ENCODE measurements at regions of chr7 and their contacts with region 1.

Region 1: DNA sequence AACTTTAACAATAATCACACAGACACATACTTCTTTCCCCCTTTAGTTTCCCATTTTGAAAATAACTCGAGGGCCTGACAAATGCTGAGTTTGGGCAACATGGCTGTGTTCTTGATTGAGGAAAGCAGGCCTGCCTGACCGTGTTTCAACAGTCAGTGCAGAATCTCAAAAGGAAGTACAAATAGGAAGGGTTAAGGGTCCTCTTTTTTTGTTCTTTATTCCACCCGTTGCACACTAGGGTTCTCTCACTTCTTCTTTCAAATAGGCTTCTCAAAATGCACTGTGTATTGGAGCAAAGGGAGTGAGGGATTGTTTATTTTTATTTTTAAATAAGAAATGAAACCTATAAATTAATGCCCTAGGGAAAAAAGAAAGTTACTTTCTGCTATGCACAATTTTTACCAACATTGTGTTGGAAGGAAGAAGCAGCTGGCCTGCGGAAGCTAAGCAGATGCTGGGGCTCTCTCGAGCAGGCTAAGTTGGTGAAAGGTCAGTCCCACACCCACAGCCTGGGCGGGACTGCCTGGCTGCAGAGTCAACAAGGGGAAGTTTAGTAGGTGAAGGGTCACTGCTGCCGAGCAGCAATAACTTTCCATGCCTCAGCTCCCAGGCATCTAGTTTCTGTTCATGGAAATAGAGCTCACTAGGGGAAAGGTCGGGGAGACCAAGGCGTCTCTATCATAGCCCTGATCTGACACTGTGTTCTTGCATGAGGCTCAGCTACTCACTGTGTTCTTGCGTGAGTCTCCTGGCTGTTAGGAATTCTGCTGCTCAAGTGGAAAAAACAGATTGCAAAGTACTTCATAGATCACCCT is 12.2 kb upstream of the PDK4 start:
- DNase-seq: peak; percentile 99
- H3K4me3 ChIP-seq: peak overlapping the region in 1 of 3 experiments; percentile 38
- H3K27ac ChIP-seq: no peak overlapping the region
- H3K4me1 ChIP-seq: peaks cover 21% of the 10 kb centered on the region
- H3K27me3 ChIP-seq: peaks cover 0 to 2% of the 10 kb centered on the region in 2 experiments
- CTCF ChIP-seq: no peak
- POLR2A ChIP-seq: no peak

Region 2: DNA sequence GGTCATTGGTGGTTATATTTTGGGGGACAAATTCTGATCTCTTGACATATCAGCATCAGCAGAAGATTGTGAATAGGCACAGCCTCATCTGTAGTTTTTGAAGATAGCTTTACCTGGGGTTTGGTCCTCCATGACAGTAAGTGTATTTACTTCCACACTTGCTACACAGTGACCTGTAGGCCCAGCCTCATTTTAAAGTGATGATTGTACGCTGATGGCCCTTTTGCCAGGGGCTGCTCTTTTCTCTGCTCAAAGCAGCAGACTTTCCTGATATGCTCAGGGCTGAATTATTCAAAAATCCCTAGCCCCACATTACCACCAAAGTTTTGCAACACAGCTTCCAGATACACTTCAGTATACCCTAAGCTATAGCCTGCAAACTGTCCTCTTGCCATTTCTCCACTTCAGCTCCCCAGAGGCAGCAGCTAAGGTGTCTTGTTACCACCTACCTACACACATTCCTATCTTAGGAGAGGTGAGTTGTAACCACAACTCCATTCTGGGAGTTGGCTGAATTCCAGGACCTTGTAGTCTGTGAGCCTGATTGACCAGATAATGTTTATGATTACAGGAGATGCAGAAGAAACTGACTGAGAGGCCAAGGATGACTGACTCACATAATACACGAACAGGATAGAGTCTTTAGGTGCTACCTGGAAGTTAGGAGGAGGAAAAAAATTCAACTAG is 116.8 kb before region 1 on chr7:
- CTCF ChIA-PET with region 1: no interaction called
- POLR2A ChIA-PET with region 1: no interaction called
- dilution Hi-C with region 1: no loop called
- intact Hi-C with region 1: no loop called
- DNase-seq: no peak
- H3K4me3 ChIP-seq: no peak overlapping the region
- H3K27ac ChIP-seq: no peak overlapping the region
- H3K4me1 ChIP-seq: no peaks in the 10 kb centered on the region
- H3K27me3 ChIP-seq: peaks cover 3% of the 10 kb centered on the region in 2 experiments
- CTCF ChIP-seq: no peak
- POLR2A ChIP-seq: no peak

Region 3: DNA sequence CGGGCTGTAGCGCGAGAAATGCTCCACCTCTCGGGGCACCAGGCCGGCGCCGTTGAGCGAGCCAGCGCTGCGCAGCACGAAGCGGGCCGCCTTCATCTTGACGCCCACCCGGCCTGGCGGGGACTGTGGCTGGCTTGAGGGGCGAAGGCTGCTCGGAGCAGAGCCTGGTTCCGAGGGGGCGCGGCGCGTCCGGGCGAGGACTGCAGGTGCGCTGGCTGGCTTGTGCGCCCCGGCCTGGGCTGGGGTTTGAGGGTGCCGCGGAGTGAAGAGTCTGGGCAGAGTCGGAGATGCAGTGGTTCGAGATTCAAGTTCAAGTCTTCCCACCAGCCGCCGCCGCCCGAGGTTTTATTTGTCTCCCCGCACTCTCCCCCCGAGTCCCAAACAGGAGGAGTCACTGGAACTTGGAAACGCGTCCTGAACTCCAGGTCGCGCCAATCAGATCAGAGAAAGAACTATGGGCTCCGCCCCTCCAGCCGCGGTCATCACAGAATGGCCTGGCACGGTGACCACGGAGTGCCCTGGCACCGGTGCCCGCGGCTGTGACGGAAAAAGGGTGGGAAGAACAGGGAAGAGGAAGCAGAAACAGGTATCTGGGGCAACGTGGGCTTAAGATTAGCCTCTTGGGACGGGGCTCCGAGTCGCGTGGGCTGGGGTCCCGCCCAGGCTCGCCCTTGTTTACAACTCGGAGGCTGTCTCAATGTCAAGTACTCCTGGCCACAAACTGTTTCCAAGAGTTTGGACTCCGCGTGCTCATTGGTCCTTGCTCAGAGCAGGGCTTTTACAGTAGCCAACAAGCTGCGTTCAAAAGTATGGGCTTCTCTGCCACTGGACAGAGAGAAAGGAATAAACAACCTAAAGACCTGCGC is 12.1 kb before region 1 on chr7 and contains the start of gene PDK4:
- CTCF ChIA-PET with region 1: interaction called, 5 read pairs
- POLR2A ChIA-PET with region 1: no interaction called
- dilution Hi-C with region 1: no loop called
- intact Hi-C with region 1: loop called (anchors 1 kb)
- DNase-seq: peak; percentile 93
- H3K4me3 ChIP-seq: peak within 1 kb of the TSS; percentile 14 to 49 (median 36)
- H3K27ac ChIP-seq: no peak within 1 kb of the TSS
- H3K4me1 ChIP-seq: peaks cover 3% of the 10 kb centered on the region
- H3K27me3 ChIP-seq: peaks cover 3% of the 10 kb centered on the region in 2 experiments
- CTCF ChIP-seq: no peak
- POLR2A ChIP-seq: no peak
- total RNA-seq, gene PDK4: 1.2 and 2.5 TPM in 2 replicates

Region 4: DNA sequence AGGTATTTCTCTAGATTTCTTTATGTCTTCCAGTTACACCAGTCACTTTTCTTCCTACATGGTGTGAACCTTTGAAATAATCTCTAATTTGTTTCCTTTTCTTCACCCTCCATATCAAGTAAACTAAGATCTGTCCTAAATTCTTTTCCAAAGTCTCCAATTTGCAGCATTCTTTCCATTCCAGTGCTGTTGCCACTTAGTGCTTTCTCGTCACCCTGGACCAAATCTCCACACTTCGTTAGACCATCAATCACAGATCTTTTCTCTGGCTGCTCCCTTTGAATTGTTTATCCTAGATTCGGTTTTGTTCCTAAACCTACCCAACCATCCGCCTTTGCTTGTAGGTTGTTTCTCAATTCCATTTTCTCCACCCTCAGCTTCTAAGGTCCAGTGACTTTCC is 238.5 kb after region 1 on chr7:
- CTCF ChIA-PET with region 1: no interaction called
- POLR2A ChIA-PET with region 1: no interaction called
- dilution Hi-C with region 1: no loop called
- intact Hi-C with region 1: no loop called
- DNase-seq: no peak
- H3K4me3 ChIP-seq: no peak overlapping the region
- H3K27ac ChIP-seq: no peak overlapping the region
- H3K4me1 ChIP-seq: no peaks in the 10 kb centered on the region
- H3K27me3 ChIP-seq: no peaks in the 10 kb centered on the region
- CTCF ChIP-seq: no peak
- POLR2A ChIP-seq: no peak